ENCODE measurements at regions of chr3 and their contacts with region 1.

Region 1: DNA sequence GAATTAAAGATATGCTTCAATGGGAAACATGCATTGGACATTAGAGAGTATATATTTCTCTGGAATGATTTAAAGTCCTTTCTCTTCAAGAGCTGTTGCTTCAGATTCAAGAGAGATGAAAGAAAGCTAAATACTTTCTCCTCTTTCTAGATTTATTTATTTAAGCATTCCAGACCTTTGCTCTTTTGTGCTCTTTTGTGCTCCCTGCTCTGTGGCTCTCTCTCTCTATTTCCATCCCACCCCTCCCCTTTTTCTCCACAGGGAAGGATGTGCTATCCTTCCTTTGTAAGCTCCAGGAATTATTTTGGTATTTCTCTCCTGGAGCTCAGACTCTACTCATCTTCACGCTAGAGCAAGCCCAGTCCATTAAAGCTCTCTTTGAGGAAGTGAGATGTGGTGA is 871.9 kb upstream of the GBE1 start:
- DNase-seq: peak; percentile 78
- ATAC-seq: peak; percentile 99
- H3K4me3 ChIP-seq: no peak overlapping the region
- H3K27ac ChIP-seq: peak overlapping the region; percentile 38
- H3K4me1 ChIP-seq: peaks cover 15% of the 10 kb centered on the region
- H3K27me3 ChIP-seq: no peaks in the 10 kb centered on the region
- CTCF ChIP-seq: no peak
- EP300 ChIP-seq: peak in 1 of 2 experiments; percentile 60; a peak in 1 of 4 replicates
- POLR2A ChIP-seq: no peak
- RAD21 ChIP-seq: no peak

Region 2: DNA sequence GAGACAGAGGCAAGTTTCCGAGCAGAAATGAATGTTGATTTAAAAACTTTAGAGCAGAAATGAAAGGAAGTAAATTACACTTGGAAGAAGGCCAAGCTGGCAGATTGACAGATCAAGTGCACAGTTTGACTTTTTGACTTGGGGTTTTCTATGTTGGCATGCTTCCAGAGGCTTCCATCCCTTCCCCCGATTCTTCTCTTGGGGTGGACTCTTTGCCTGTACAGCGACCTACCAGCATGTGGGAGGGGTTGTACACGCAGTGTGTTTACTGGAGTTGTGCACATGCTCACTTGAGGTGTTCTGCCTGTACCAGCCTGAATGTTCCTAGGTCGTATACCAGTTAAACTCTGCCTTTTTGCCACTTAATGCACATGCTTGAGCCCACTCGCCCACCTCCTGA is 170.3 kb before region 1 on chr3:
- CTCF ChIA-PET with region 1: no interaction called
- POLR2A ChIA-PET with region 1: no interaction called
- in situ Hi-C with region 1: no loop called
- intact Hi-C with region 1: loop called (anchors 5 kb)
- DNase-seq: peak; percentile 4
- ATAC-seq: no peak
- H3K4me3 ChIP-seq: no peak overlapping the region
- H3K27ac ChIP-seq: peak overlapping the region; percentile 94
- H3K4me1 ChIP-seq: peaks cover 44% of the 10 kb centered on the region
- H3K27me3 ChIP-seq: no peaks in the 10 kb centered on the region
- CTCF ChIP-seq: no peak
- EP300 ChIP-seq: no peak
- POLR2A ChIP-seq: no peak
- RAD21 ChIP-seq: no peak

Measured in HepG2 (cell line).